ENCODE measurements at regions of chr11 and their contacts with region 1.

Region 1: GRCh38 chr11:17504330-17505107 is 27.9 kb upstream of the ABCC8 start:
- DNase-seq: peak; percentile 48
- H3K4me3 ChIP-seq: no peak overlapping the region
- H3K27ac ChIP-seq: no peak overlapping the region
- H3K4me1 ChIP-seq: no peaks in the 10 kb centered on the region
- H3K27me3 ChIP-seq: no peaks in the 10 kb centered on the region
- CTCF ChIP-seq: peak; percentile 93 to 96

Region 2: GRCh38 chr11:17230867-17231851 is 273.4 kb before region 1 on chr11:
- CTCF ChIA-PET with region 1: no interaction called
- dilution Hi-C with region 1: no loop called
- in situ Hi-C with region 1: loop called in 1 of 2 experiments (anchors 5 kb)
- intact Hi-C with region 1: loop called (anchors 1 kb)
- DNase-seq: no peak
- H3K4me3 ChIP-seq: no peak overlapping the region
- H3K27ac ChIP-seq: no peak overlapping the region
- H3K4me1 ChIP-seq: no peaks in the 10 kb centered on the region
- H3K27me3 ChIP-seq: no peaks in the 10 kb centered on the region
- CTCF ChIP-seq: no peak

Region 3: DNA sequence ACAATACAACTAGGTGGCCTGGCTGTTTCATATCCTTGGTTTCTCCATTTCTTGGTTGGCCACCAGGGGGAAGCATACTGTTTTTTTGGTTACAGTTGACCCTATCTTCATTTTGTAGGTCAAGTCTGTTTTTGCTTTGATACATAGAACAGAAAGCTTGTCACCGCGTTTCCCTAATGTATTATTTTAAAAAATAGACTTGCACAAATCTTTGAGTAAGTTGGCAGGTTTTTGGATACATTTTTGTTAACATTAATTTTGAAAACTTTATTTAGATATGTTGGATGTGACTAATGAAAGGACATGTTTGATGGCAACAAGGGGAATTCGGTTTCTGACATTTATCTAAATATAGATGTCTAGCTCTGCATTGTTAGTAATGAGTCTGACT is 149.9 kb before region 1 on chr11:
- CTCF ChIA-PET with region 1: no interaction called
- dilution Hi-C with region 1: no loop called
- in situ Hi-C with region 1: no loop called
- intact Hi-C with region 1: no loop called
- DNase-seq: peak; percentile 57
- H3K4me3 ChIP-seq: peak overlapping the region in 1 of 3 experiments; percentile 43
- H3K27ac ChIP-seq: no peak overlapping the region
- H3K4me1 ChIP-seq: peaks cover 20% of the 10 kb centered on the region
- H3K27me3 ChIP-seq: no peaks in the 10 kb centered on the region
- CTCF ChIP-seq: peak; percentile 65 to 69

Region 4: GRCh38 chr11:17598700-17599459 is 94.4 kb after region 1 on chr11:
- CTCF ChIA-PET with region 1: no interaction called
- dilution Hi-C with region 1: no loop called
- in situ Hi-C with region 1: no loop called
- intact Hi-C with region 1: no loop called
- DNase-seq: peak; percentile 20
- H3K4me3 ChIP-seq: no peak overlapping the region
- H3K27ac ChIP-seq: no peak overlapping the region
- H3K4me1 ChIP-seq: no peaks in the 10 kb centered on the region
- H3K27me3 ChIP-seq: no peaks in the 10 kb centered on the region
- CTCF ChIP-seq: peak; percentile 96 to 97